PC-3 (cell line): ENCODE measurements at regions of chr10 and their contacts with region 1.

Region 1: DNA sequence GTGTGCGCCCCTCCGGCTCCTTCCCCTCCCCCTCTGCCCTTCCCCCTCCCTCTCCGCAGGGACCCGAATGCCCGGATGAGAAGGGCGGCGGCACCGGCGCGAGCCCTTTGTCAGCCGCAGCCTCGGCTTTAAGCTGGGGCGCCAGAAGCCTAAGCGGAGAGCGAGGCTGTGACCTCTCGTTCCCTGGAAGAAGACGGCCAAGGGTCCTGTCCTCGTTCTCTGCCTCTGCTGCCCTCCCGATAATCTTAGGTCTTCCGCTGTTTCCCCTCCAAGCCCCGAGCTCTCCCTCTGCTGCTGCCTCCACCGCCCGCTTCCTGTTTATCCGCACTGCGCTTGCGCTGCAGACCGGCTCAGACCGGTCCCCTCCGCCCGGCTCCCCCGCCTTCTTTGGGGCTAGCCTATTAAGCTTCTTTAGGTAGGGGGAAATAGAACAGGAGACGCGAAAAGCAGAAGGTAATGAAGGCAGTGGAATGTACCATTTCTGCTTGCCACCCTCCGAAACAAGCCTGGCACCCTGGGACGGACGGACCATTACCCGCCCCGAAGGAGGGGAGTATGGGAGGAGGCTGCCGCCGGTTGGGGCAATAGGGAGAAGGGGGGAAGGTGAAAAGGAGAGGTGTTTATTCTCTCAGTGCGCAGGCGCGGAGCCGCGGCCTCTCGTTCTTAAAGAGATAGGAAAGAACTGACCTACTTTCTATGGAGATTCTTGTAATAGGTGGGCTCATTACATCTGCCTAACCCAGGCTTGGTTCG is at the start of gene OGA:
- DNase-seq: peak; percentile 95
- ATAC-seq: peak; percentile 86
- H3K4me3 ChIP-seq: peak within 1 kb of the TSS; percentile 99
- H3K27ac ChIP-seq: peak within 1 kb of the TSS; percentile 53
- H3K4me1 ChIP-seq: peaks cover 21% of the 10 kb centered on the region
- H3K27me3 ChIP-seq: no peaks in the 10 kb centered on the region
- CTCF ChIP-seq: no peak
- total RNA-seq, gene OGA: 42.7 and 43.0 TPM in 2 replicates

Region 2: GRCh38 chr10:101763141-101763846 is 55.0 kb before region 1 on chr10:
- CTCF ChIA-PET with region 1: no interaction called
- POLR2A ChIA-PET with region 1: interaction called, 14 read pairs
- intact Hi-C with region 1: no loop called
- DNase-seq: no peak
- ATAC-seq: no peak
- H3K4me3 ChIP-seq: no peak overlapping the region
- H3K27ac ChIP-seq: no peak overlapping the region
- H3K4me1 ChIP-seq: no peaks in the 10 kb centered on the region
- H3K27me3 ChIP-seq: no peaks in the 10 kb centered on the region
- CTCF ChIP-seq: no peak

Region 3: DNA sequence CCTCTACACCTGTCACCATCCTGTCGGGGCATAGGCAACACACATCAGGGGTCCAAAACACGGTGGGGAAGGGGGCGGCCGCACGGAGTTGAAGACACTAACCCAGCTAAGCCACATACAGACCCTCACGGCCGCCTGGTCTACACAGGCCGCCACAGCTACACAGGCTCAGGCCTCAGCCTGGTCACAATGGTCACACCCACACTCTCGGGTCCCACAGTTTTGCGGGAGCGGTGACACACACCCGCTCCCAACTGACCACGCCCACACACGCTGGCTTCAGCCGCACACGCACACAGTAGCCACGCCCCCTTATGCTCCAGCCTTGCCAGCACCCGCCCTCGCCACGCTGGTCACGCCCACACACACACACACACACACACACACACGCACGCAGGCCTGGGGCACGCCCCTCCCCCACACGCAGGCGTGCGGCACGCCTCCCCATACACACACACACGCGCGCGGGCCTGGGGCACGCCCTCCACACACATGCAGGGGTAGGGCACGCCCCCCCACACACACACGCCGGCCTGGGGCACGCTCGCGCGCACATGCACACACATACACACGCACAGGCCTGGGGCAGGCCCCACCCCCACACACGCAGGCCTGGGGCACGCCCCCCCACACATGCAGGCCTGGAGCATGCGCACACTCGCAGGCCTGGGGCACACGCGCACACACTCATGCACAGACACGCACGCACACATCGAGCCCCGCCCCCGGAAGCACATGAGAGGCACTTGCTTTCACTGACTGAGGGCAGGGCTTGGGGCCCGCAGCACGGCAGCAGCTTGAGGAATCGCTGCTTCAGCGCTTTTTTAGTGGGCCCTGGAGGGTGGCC is 12.2 kb after region 1 on chr10:
- CTCF ChIA-PET with region 1: interaction called, 3 read pairs
- POLR2A ChIA-PET with region 1: no interaction called
- intact Hi-C with region 1: loop called (anchors 1 kb)
- DNase-seq: peak; percentile 80
- ATAC-seq: peak; percentile 69
- H3K4me3 ChIP-seq: peak overlapping the region; percentile 62
- H3K27ac ChIP-seq: peak overlapping the region; percentile 80
- H3K4me1 ChIP-seq: peaks cover 22% of the 10 kb centered on the region
- H3K27me3 ChIP-seq: no peaks in the 10 kb centered on the region
- CTCF ChIP-seq: no peak